ENCODE measurements at regions of chr2 and their contacts with region 1.

Region 1: GRCh38 chr2:73926493-73927338 is at the start of gene DGUOK:
- DNase-seq: peak; percentile 97 to 99 (median 98)
- ATAC-seq: peak; percentile 100
- H3K4me3 ChIP-seq: peak within 1 kb of the TSS; percentile 40 to 87 (median 74)
- H3K27ac ChIP-seq: peak within 1 kb of the TSS; percentile 84 to 98 (median 94)
- H3K4me1 ChIP-seq: peaks cover 0 to 46% (median 26%) of the 10 kb centered on the region in 12 donors
- H3K27me3 ChIP-seq: peaks cover 0 to under 1% (median 0%) of the 10 kb centered on the region in 9 donors
- CTCF ChIP-seq: peak in 1 of 12 donors; percentile 7
- POLR2A ChIP-seq: peak in 1 of 2 donors; percentile 87
- total RNA-seq, gene DGUOK: 22.6 to 32.1 (median 24.3) TPM

Region 2: GRCh38 chr2:73839652-73840411 is 86.9 kb before region 1 on chr2:
- intact Hi-C with region 1: loop called in 1 of 10 experiments (anchors 5 kb)
- DNase-seq: no peak
- ATAC-seq: no peak
- H3K4me3 ChIP-seq: no peak overlapping the region
- H3K27ac ChIP-seq: peak overlapping the region in 1 of 12 donors; percentile 84
- H3K4me1 ChIP-seq: peaks cover 0 to 18% (median 3%) of the 10 kb centered on the region in 12 donors
- H3K27me3 ChIP-seq: no peaks in the 10 kb centered on the region
- CTCF ChIP-seq: no peak
- POLR2A ChIP-seq: no peak

Region 3: DNA sequence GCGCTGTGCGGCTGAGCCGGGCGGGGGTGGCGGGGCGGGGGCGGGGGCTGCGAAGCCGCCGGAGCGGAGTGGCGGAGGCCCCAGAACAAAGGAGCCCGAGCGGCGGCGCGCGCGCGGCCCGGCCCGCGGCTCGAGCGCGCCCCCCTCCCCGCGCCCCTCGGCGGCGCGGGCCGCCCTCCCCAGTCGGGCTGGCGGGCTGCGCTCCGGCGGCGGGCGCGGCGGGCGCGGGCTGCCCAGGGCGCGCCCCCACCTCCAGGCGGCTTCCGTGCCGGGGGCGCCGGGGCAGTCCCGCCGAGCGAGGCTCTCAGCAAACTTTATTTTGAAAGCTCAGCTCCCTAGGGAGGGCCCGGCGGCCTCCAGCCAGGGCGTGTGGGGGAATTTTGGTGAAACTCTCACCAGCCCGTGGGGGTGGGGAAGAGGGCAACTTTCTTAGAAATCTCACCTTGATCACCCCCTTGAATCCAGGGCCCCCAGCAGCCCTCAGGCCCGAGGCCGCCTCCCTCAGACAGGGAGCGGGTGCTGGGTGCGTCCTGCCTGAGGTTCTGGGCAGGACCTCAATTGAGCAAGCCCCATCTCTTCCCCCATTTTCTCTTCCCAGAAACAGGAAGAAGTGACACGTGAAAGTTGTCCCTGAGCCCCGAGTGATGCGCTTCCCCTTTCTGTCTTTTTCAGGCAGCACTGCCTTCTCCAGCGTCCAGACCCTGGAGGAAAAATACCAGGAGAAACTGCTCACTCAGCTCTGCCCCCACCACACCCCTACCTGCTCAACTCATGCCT is 58.8 kb after region 1 on chr2:
- intact Hi-C with region 1: loop called in 8 of 10 experiments (anchors 2 to 10 kb)
- DNase-seq: peak in 4 of 5 donors; percentile 53 to 77 (median 56)
- ATAC-seq: peak in 3 of 4 donors; percentile 5 to 11 (median 11)
- H3K4me3 ChIP-seq: peak overlapping the region; percentile 31 to 71 (median 60)
- H3K27ac ChIP-seq: peak overlapping the region in 10 of 12 donors; percentile 46 to 95 (median 64)
- H3K4me1 ChIP-seq: peaks cover 0 to 84% (median 51%) of the 10 kb centered on the region in 12 donors
- H3K27me3 ChIP-seq: no peaks in the 10 kb centered on the region
- CTCF ChIP-seq: no peak
- POLR2A ChIP-seq: peak in 1 of 2 donors; percentile 38

Region 4: DNA sequence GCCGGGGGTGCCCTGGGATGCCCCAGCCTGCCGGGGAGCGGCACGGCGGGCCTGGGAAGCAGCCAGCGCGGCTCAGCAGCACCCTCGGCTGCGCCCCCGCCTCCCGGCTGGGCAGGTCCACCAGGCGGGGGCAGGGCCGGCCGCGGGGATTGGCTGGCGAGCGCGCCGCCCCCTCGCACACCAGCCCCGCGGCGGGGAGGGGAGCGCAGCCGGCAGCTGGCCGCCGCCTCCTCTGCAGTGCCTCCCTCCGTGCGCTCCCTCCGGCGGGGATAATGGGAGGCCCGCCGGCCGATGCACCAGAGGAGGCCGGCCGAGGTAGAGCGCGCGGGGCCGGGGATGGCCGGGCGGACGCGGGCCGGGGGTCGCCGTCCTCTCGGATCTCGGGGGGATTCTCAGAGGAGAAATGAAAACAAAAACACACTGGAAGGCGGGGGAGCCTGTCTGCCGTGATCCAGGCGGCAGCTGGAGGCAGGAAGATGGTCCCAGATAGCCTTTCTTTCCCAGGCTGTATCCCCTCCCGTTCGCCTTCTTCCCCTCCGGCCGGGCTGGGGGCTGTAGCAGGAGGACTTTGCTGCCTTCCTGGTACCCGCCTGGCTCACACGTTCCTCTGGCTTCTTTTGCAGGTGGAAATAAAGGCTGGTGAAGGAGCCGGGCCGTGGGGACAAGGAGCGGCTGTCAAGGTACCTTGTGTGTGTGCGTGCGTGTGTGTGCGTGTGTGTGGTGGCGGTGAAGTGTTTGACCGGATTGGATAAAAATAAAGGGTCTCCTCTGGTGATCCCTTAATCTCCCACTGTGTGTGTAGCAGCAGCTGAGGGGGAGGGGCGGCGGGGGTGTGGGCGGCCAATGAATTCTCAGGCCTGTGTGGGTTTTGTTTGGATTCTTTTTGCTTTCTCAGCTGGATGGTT is 76.0 kb after region 1 on chr2:
- intact Hi-C with region 1: loop called in 2 of 10 experiments (anchors 5 kb)
- DNase-seq: peak; percentile 90 to 94 (median 90)
- ATAC-seq: peak; percentile 88 to 99 (median 96)
- H3K4me3 ChIP-seq: peak overlapping the region; percentile 45 to 78 (median 62)
- H3K27ac ChIP-seq: peak overlapping the region in 11 of 12 donors; percentile 20 to 67 (median 55)
- H3K4me1 ChIP-seq: peaks cover 0 to 77% (median 42%) of the 10 kb centered on the region in 12 donors
- H3K27me3 ChIP-seq: no peaks in the 10 kb centered on the region
- CTCF ChIP-seq: peak in 3 of 12 donors; percentile 5 to 48 (median 11)
- POLR2A ChIP-seq: peak; percentile 66 to 85

Region 5: GRCh38 chr2:74147727-74148456 is 221.2 kb after region 1 on chr2 and contains the start of gene BOLA3:
- intact Hi-C with region 1: loop called in 4 of 10 experiments (anchors 10 kb)
- DNase-seq: peak; percentile 89 to 94 (median 90)
- ATAC-seq: peak; percentile 76 to 99 (median 97)
- H3K4me3 ChIP-seq: peak within 1 kb of the TSS; percentile 66 to 99 (median 88)
- H3K27ac ChIP-seq: peak within 1 kb of the TSS in 11 of 12 donors; percentile 62 to 81 (median 74)
- H3K4me1 ChIP-seq: peaks cover 3 to 25% (median 16%) of the 10 kb centered on the region in 12 donors
- H3K27me3 ChIP-seq: no peaks in the 10 kb centered on the region
- CTCF ChIP-seq: peak; percentile 59 to 95 (median 82)
- POLR2A ChIP-seq: peak in 1 of 2 donors; percentile 58
- total RNA-seq, gene BOLA3: 52.2 to 165 (median 65.3) TPM

Region 6: DNA sequence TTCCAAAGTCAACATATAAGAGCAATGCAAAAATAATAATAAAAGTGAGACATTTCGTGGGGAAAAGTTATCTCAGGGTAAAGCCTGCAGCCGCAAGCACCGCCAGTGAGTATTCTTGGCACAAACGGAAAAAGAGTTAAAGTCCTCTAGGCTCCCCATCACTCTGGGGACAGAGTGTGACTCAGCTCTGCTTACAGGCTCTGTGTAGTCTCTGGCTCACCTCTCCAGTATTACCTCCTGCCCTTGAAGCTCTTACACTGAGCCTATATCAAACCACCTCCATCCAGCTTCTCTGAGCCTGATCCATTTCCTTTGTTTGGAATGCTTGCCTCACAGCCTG is 327.2 kb after region 1 on chr2:
- intact Hi-C with region 1: no loop called
- DNase-seq: peak in 2 of 5 donors; percentile 44 to 47
- ATAC-seq: peak; percentile 82 to 96 (median 92)
- H3K4me3 ChIP-seq: no peak overlapping the region
- H3K27ac ChIP-seq: peak overlapping the region in 6 of 12 donors; percentile 6 to 52 (median 40)
- H3K4me1 ChIP-seq: peaks cover 0 to 13% (median 2%) of the 10 kb centered on the region in 12 donors
- H3K27me3 ChIP-seq: no peaks in the 10 kb centered on the region
- CTCF ChIP-seq: no peak
- POLR2A ChIP-seq: no peak

Measured in heart left ventricle (tissue), 16 donors.